Natural killer cell (primary cell): ENCODE measurements at regions of chr1 and their contacts with region 1.

Region 1: GRCh38 chr1:234724516-234725176 is 114.7 kb upstream of the IRF2BP2 start:
- DNase-seq: peak in 1 of 2 donors; percentile 60
- ATAC-seq: peak in 2 of 3 donors; percentile 27 to 30
- H3K4me3 ChIP-seq: peak overlapping the region; percentile 18
- H3K4me3 Mint-ChIP-seq: peak overlapping the region; percentile 87
- H3K27ac ChIP-seq: peak overlapping the region; percentile 90
- H3K27ac Mint-ChIP-seq: peak overlapping the region; percentile 91
- H3K4me1 ChIP-seq: peaks cover 52% of the 10 kb centered on the region
- H3K4me1 Mint-ChIP-seq: peaks cover 24 to 39% of the 10 kb centered on the region in 2 donors
- H3K27me3 ChIP-seq: no peaks in the 10 kb centered on the region
- H3K27me3 Mint-ChIP-seq: no peaks in the 10 kb centered on the region
- CTCF ChIP-seq: no peak

Region 2: DNA sequence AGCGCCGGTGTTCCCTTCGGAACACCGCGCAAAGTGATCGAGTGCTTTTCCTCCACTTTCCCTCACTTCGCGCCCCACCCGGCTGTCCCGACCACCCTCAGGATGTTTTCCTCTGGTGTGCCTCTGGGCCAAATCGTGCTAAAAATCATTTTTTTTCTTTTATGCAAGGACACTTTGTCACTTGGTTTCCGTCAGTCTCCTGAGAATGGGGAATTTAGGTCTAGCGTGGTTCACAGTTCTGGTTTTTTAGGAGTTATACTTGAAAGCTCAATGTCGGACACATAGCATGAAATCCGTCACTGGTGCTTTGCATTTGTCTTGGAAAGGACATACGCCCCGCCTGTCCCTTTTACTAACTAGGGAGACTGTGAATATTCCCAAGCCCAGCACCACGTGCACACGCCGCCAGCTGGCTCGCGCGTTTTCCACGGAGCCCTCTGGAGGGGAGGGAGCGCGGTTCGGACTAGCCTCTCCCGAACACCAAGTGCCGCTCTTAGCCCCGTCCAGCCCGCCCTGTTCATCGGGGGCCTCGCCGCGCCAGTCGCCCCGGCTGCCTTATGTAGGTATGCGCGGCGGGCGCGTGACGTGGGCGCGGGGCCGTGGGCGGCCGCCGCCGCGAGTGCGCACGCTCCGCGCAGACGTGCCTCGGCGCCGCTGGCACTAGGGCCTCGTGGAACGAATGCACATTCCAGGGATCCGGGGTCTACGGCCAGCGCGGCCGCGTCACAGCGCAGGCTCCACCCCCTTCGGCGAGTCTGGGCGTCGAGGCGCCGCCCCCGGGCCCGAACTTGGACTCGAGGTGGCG is 114.1 kb before region 1 on chr1:
- intact Hi-C with region 1: loop called (anchors 2 kb)
- DNase-seq: peak; percentile 89 to 97
- ATAC-seq: peak; percentile 51 to 77 (median 64)
- H3K4me3 ChIP-seq: peak overlapping the region; percentile 92
- H3K4me3 Mint-ChIP-seq: peak overlapping the region; percentile 94
- H3K27ac ChIP-seq: peak overlapping the region; percentile 99
- H3K27ac Mint-ChIP-seq: peak overlapping the region; percentile 96 to 98
- H3K4me1 ChIP-seq: peaks cover 53% of the 10 kb centered on the region
- H3K4me1 Mint-ChIP-seq: peaks cover 59 to 60% of the 10 kb centered on the region in 2 donors
- H3K27me3 ChIP-seq: no peaks in the 10 kb centered on the region
- H3K27me3 Mint-ChIP-seq: no peaks in the 10 kb centered on the region
- CTCF ChIP-seq: no peak